Aorta (tissue), 5 donors: ENCODE measurements at regions of chr1 and their contacts with region 1.

Region 1: DNA sequence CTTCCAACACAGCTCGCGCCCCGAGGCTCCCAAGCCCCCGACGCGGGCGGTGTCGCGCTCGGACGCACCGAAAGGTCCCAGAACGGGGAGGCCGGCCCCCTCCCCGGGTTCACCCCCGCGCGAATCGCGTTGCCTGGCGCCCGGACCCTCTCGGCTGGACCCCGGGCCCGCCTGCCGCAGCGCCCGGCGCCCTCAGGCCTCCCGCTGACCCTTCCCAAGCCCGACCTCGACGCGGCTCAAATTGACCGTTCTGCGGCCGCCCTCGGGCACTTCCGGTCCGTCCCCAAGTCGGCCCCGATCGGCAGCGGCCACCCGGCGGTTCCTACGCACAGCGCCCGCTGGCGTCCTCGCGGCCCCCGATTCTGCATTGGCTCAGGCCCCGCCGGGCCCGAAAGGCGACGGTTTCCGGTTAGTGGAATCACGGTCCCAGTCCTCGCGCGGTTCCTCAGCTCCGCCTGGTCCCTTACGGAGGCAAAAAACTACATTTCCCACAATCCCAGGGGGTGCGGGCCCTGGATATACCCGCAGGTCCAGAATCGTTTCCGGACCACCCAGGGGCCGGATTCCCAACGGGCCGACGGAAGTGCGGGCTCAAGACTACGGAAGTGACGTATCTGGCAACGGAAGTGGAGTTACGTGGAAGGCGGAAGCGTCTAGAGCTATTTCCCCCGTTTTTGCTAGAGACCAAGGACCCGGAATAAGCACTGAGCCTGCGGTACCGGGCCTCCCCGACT is at the start of gene AURKAIP1:
- DNase-seq: peak; percentile 99
- ATAC-seq: peak; percentile 97
- H3K4me3 ChIP-seq: peak within 1 kb of the TSS; percentile 61 to 69
- H3K27ac ChIP-seq: peak within 1 kb of the TSS in 1 of 2 donors; percentile 73
- H3K4me1 ChIP-seq: no peaks in the 10 kb centered on the region
- H3K27me3 ChIP-seq: no peaks in the 10 kb centered on the region
- total RNA-seq, gene AURKAIP1: 59.6 to 65.6 TPM

Region 2: DNA sequence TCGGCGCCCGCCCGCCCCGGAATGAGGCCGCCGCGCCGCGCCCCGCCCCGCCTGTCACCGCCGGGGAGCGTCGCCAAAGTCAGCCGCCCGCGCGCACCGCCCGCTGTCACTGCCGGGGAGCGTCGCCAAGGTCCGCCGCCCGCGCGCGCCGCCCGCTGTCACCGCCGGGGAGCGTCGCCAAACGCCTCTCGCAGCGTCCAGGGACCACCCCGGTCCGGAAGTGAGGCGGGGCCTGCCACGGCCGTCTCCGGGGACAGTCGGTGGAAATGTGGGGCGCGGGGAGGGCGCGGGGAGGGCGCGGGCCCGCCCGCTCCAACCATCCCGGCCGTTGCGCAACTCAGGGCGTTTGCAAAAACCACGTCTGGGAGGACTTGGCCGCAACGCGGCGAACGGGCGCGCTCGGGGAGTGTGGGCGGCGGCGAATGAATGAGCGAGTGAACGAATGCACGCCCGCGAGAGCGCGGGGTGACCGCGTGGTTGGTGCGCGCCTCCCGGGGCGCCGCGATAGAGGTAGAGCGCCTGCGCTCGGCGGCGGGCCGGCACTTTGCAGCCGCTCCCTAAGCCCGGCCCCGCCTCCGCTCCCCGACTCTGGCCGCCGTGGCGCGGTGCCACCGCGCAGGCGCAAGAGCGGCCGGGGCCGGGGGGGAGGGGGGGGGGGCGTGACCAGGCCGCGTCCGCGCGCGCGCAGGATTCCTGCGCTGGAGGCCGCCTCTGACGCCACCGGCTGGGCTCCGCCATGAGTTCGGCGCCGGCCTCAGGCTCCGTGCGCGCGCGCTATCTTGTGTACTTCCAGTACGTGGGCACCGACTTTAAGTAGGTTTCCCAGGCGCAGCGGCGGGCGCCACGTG is 67.0 kb before region 1 on chr1 and contains the starts of genes ACAP3 and PUSL1:
- intact Hi-C with region 1: loop called in 1 of 2 experiments (anchors 1 kb)
- DNase-seq: peak; percentile 94 to 96
- ATAC-seq: peak; percentile 87
- H3K4me3 ChIP-seq: peak within 1 kb of the TSS; percentile 55 to 60
- H3K27ac ChIP-seq: peak within 1 kb of the TSS; percentile 9 to 85
- H3K4me1 ChIP-seq: no peaks in the 10 kb centered on the region
- H3K27me3 ChIP-seq: no peaks in the 10 kb centered on the region
- total RNA-seq, gene ACAP3: 25.0 to 69.2 TPM
- total RNA-seq, gene PUSL1: 7.4 to 12.6 TPM

Region 3: GRCh38 chr1:1349256-1350012 is 25.7 kb before region 1 on chr1 and contains the start of gene DVL1:
- intact Hi-C with region 1: loop called (anchors 1 to 2 kb)
- DNase-seq: peak; percentile 82 to 92
- ATAC-seq: peak; percentile 64
- H3K4me3 ChIP-seq: peak within 1 kb of the TSS; percentile 82 to 85
- H3K27ac ChIP-seq: peak within 1 kb of the TSS in 1 of 2 donors; percentile 63
- H3K4me1 ChIP-seq: no peaks in the 10 kb centered on the region
- H3K27me3 ChIP-seq: no peaks in the 10 kb centered on the region
- total RNA-seq, gene DVL1: 48.7 to 53.7 TPM

Region 4: DNA sequence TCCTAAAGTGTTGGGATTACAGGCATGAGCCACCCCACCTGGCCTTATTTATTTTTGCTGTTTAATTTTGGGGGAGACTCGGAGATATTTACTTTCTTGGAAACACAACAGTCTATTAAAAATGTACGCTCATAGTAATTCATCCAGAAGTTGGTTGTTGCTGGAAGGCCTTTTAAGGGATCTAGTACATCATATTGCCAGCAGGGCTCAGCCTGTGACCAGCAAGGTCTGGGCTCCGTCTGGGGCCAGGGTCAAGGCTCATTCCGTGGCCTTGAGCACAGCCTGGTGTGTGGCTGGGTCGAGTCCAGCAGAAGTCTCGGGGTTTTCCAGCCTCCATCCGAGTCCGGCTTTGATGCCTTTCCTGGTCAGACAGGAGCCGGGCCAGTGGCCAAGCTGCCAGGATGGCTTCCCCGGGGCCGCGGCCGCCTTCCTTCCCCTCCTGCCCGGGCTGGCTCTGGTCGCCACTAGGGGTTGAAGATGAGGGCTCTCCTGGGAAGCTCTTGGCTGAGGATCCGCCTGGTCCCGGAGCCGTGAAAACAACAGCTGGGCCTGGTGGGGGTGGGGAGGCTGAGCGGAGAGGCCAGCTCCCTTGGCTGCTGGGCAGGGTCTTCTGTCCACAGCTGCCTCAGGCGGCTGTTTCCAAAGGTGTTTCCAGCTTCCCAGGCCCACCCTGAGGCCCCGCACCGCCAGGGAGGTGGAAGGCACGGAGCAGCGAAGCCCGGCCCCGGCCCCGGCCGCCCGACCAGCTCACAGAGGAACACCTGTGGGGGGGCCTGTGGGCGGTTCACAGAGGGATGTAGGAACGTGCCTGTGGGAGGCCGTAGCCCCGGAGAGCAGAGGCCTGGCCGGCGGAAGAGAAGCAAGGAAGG is 55.3 kb after region 1 on chr1:
- intact Hi-C with region 1: no loop called
- DNase-seq: peak; percentile 75 to 89
- ATAC-seq: peak; percentile 63
- H3K4me3 ChIP-seq: no peak overlapping the region
- H3K27ac ChIP-seq: no peak overlapping the region
- H3K4me1 ChIP-seq: no peaks in the 10 kb centered on the region
- H3K27me3 ChIP-seq: no peaks in the 10 kb centered on the region